ENCODE measurements at regions of chr1 and their contacts with region 1.

Region 1: DNA sequence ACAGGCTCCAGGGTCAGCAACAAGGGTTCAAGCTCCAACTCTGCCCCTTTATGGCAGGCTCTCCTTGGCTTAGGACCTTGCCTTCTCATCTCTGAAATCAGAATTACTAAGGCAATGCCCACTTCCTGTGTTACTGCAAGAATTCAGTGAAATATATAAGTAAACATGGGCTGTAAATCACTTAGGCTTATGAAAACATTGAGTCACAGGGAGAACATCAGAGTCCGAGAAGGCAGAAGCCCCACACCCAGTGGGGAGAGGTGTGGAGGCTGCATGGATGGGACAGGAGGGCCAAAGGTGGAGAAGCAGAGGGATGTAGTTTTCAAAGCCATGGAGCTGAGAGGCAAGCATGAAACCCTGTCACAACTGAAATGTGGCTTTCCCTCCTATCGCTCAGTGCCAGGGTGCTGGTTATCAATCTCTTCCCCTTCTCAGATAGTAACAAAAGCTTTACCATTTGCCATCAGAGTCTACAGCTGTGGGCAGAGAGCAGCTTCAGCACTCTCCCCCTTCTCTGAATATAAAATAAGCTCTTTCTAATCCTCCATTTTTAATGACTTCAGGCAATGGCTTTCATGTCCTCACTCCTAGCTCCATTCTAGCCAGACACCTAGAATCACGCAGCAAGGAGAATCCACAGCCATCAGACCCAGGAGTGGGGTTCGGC is 3.4 kb downstream of the RGS8 start:
- DNase-seq: no peak
- H3K4me3 ChIP-seq: no peak overlapping the region
- H3K4me3 Mint-ChIP-seq: no peak overlapping the region
- H3K27ac ChIP-seq: no peak overlapping the region
- H3K27ac Mint-ChIP-seq: no peak overlapping the region
- H3K4me1 ChIP-seq: no peaks in the 10 kb centered on the region
- H3K4me1 Mint-ChIP-seq: no peaks in the 10 kb centered on the region
- H3K27me3 ChIP-seq: no peaks in the 10 kb centered on the region
- H3K27me3 Mint-ChIP-seq: peaks cover 4 to 10% of the 10 kb centered on the region in 2 donors

Region 2: GRCh38 chr1:182699393-182700350 is 18.6 kb after region 1 on chr1:
- CTCF ChIA-PET with region 1: no interaction called
- POLR2A ChIA-PET with region 1: no interaction called
- intact Hi-C with region 1: no loop called
- DNase-seq: no peak
- H3K4me3 ChIP-seq: no peak overlapping the region
- H3K4me3 Mint-ChIP-seq: no peak overlapping the region
- H3K27ac ChIP-seq: no peak overlapping the region
- H3K27ac Mint-ChIP-seq: no peak overlapping the region
- H3K4me1 ChIP-seq: no peaks in the 10 kb centered on the region
- H3K4me1 Mint-ChIP-seq: no peaks in the 10 kb centered on the region
- H3K27me3 ChIP-seq: no peaks in the 10 kb centered on the region
- H3K27me3 Mint-ChIP-seq: peaks cover 8 to 15% of the 10 kb centered on the region in 2 donors

Region 3: GRCh38 chr1:182761396-182762395 is 80.7 kb after region 1 on chr1:
- CTCF ChIA-PET with region 1: no interaction called
- POLR2A ChIA-PET with region 1: no interaction called
- intact Hi-C with region 1: no loop called
- DNase-seq: no peak
- H3K4me3 ChIP-seq: no peak overlapping the region
- H3K4me3 Mint-ChIP-seq: no peak overlapping the region
- H3K27ac ChIP-seq: no peak overlapping the region
- H3K27ac Mint-ChIP-seq: no peak overlapping the region
- H3K4me1 ChIP-seq: no peaks in the 10 kb centered on the region
- H3K4me1 Mint-ChIP-seq: no peaks in the 10 kb centered on the region
- H3K27me3 ChIP-seq: no peaks in the 10 kb centered on the region
- H3K27me3 Mint-ChIP-seq: peaks cover 0 to 3% of the 10 kb centered on the region in 2 donors

Region 4: DNA sequence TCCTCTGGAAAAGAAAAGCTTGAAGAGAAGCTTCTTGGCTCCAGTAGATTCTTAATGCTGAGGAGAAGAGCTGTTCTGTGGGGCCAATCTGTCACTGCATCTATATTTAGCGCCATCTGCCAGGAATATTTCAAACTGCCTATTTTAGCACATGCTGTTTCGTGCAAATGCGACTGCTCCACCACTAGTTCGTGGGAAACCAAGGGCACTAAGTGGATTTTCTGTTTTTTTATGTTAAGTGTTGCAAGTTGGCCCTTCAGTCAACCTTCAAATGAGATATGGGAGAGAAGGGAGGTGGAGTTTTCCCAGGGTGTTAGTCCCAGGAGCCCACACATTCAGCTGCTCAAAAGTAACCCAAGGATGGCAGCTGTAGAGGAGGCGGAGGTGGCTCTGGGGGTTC is 1462.4 kb after region 1 on chr1:
- CTCF ChIA-PET with region 1: no interaction called
- POLR2A ChIA-PET with region 1: no interaction called
- intact Hi-C with region 1: loop called (anchors 10 kb)
- DNase-seq: no peak
- H3K4me3 ChIP-seq: no peak overlapping the region
- H3K4me3 Mint-ChIP-seq: no peak overlapping the region
- H3K27ac ChIP-seq: no peak overlapping the region
- H3K27ac Mint-ChIP-seq: no peak overlapping the region
- H3K4me1 ChIP-seq: no peaks in the 10 kb centered on the region
- H3K4me1 Mint-ChIP-seq: no peaks in the 10 kb centered on the region
- H3K27me3 ChIP-seq: no peaks in the 10 kb centered on the region
- H3K27me3 Mint-ChIP-seq: peaks cover 14 to 22% of the 10 kb centered on the region in 2 donors

Measured in CD4-positive, alpha-beta memory T cell (primary cell).